Stomach (tissue), 19 donors: ENCODE measurements at regions of chr12 and their contacts with region 1.

Region 1: GRCh38 chr12:51281202-51281924 is 11.1 kb upstream of the SMAGP start:
- DNase-seq: no peak
- H3K4me3 ChIP-seq: no peak overlapping the region
- H3K27ac ChIP-seq: no peak overlapping the region
- H3K4me1 ChIP-seq: no peaks in the 10 kb centered on the region
- H3K27me3 ChIP-seq: peaks cover 0 to 5% (median 0%) of the 10 kb centered on the region in 3 donors
- CTCF ChIP-seq: no peak
- EP300 ChIP-seq: no peak
- POLR2A ChIP-seq: no peak

Region 2: DNA sequence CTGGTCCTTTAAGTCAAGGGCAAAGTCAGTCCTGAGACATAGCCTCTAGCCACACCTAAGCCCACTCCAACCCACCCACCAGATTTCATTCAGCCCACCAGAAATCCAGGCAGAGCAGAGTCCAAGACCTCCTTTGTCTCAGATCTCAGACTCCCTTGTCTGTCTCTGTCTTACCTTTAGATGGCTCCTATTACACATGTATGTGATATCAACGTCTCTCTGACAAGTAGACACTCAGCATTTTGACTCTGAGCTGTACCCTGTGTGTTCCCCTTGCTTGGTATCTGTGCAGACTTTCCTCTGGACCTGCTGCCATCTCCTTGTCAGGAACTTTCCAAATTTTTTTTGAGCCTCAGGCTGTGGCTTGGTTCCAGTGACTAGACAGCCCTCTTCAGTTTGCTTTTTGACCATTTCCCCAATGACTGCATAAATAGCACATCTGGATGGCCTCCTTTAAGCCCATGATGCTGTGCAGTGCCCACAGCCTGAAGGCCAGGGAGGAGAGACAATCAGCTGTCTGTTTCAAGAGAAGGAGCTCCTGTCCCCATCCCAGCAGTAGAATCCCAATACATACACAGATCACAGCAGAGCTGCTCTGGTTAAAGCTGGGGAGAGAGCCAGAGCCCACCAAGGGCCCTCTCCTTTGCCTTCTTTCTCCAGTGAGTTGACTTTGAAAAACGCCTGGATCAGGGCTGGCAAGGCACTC is 70.5 kb before region 1 on chr12:
- intact Hi-C with region 1: no loop called
- DNase-seq: no peak
- H3K4me3 ChIP-seq: no peak overlapping the region
- H3K27ac ChIP-seq: no peak overlapping the region
- H3K4me1 ChIP-seq: peaks cover 0 to 3% (median 1%) of the 10 kb centered on the region in 4 donors
- H3K27me3 ChIP-seq: no peaks in the 10 kb centered on the region
- CTCF ChIP-seq: no peak
- EP300 ChIP-seq: no peak
- POLR2A ChIP-seq: no peak

Region 3: DNA sequence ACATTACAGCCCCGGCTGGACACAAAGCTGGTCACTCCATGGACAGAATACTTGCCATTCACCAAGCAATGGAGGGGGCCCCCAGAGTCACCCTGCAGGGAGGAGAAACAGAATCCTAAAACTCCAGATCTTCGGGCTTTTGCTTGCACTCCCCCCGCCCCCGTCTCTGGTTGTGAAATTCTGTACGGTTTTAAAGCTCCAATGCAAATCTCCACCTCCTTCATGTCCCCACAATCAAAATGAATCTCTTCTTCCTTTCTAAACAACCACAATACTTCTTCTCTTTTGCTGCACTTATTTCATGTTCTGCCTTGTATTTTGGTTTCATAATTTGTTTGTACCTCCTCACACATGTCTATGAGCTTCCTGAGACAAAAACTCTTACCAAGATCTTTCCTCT is 48.4 kb after region 1 on chr12:
- intact Hi-C with region 1: loop called (anchors 10 kb)
- DNase-seq: no peak
- H3K4me3 ChIP-seq: no peak overlapping the region
- H3K27ac ChIP-seq: no peak overlapping the region
- H3K4me1 ChIP-seq: peaks cover 0 to 40% (median 0%) of the 10 kb centered on the region in 4 donors
- H3K27me3 ChIP-seq: no peaks in the 10 kb centered on the region
- CTCF ChIP-seq: no peak
- EP300 ChIP-seq: no peak
- POLR2A ChIP-seq: no peak